Activated T-helper 1 cell treated with anti-CD3 and anti-CD28 coated beads, Interleukin-12 subunit alpha, Interleukin-12 subunit beta, Interleukin-2, Interleukin-4 antibody, amounts not matched to agents 30 ng/mL and 10 ng/mL and 1 ng/mL, durations not matched to agents 14 hours and 24 hours and 36 hours (primary cell): ENCODE measurements at regions of chr4 and their contacts with region 1.

Region 1: DNA sequence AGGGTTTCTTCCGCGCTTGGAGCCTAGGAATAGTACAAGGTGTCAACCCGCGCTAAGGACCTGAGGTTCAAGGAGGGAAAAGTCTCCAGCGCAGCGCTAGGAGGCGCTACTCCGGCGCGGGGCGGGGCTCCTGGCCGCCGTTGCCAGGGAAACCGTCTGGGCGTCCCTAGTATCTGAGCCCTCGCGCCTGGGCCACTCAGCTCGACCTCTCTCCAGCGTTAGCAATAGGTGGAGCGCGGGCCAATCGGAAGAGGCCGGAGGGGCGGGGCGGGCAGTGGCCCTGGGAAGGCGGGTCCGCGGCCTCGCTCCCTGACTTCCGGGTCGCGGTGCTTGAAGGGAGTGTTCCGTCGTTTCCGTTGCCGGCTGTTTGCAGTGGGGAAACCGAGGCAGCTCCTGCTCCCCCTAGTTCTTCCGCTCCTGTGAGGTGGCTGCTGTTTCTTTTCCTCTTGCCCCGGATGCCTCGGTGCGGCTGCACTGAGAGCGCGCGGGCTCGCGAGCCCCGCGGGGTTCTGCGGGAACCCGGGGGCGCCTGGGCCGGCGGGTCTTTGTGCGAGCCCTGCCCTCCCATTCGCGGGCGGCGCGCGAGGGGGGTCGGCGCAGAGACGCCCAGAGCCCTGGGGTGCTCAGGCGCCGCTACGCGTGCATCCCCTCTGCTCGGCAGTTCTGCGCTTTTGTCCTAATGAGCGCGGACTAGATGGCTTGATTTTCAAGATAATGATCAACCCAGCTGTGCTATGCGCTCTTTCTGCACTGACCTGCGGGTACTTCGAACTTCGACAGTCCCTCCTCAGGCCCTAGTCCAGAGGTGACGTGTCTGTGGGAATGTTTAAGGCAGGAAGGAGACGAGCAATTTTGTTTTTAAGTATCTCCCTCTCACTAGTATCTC is at the start of gene ELMOD2:
- DNase-seq: peak; percentile 97
- H3K4me3 Mint-ChIP-seq: peak within 1 kb of the TSS; percentile 88
- H3K27ac Mint-ChIP-seq: peak within 1 kb of the TSS; percentile 55
- H3K4me1 Mint-ChIP-seq: peaks cover 19% of the 10 kb centered on the region
- H3K27me3 Mint-ChIP-seq: no peaks in the 10 kb centered on the region
- total RNA-seq, gene ELMOD2: 10.8 and 15.7 TPM in 2 replicates

Region 2: DNA sequence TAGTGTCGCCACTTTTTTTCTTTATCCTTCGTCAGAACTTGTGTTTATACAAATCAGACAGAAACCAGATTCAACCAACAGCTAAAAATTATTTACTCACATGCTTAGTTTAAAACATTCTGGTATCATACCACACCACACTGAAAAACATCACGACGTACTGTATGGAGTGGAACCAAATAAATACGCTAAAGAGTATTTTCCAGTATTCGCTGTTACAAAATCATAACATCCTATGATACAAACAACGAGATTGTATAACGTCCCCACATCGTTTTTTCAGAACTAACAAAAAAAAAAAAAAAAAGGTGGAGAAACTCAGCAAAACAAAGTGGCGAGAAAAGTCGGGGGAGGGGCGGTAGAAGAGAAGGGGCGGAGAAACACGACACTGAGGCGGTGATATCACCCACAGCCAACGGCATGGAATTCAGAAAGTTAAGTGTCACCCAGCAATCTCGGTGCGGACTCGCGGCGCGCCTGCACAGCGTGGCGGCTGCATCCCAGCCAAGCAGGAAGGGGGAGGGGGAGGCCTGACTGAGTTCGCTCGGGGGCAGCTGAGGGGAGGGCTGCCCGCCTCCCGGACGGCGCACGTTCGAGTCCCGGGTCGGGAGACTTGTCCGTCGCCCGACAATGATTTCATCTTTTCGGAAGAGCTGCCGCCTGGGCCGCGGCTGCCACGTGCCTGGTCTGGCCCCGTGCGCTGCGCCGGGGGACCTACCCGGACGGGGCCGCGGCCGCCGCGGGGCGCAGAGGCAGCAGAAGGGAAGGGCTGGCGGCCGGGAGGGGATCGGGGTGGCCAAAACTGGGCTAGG is 969.0 kb before region 1 on chr4:
- intact Hi-C with region 1: loop called (anchors 2 kb)
- DNase-seq: peak; percentile 78
- H3K4me3 Mint-ChIP-seq: peak overlapping the region; percentile 93
- H3K27ac Mint-ChIP-seq: peak overlapping the region; percentile 96
- H3K4me1 Mint-ChIP-seq: peaks cover 47% of the 10 kb centered on the region
- H3K27me3 Mint-ChIP-seq: peaks cover 13% of the 10 kb centered on the region

Region 3: GRCh38 chr4:139875411-139875825 is 648.7 kb before region 1 on chr4:
- intact Hi-C with region 1: no loop called
- DNase-seq: no peak
- H3K4me3 Mint-ChIP-seq: no peak overlapping the region
- H3K27ac Mint-ChIP-seq: no peak overlapping the region
- H3K4me1 Mint-ChIP-seq: peaks cover 12% of the 10 kb centered on the region
- H3K27me3 Mint-ChIP-seq: no peaks in the 10 kb centered on the region

Region 4: GRCh38 chr4:140135529-140136088 is 388.5 kb before region 1 on chr4:
- intact Hi-C with region 1: no loop called
- DNase-seq: no peak
- H3K4me3 Mint-ChIP-seq: no peak overlapping the region
- H3K27ac Mint-ChIP-seq: no peak overlapping the region
- H3K4me1 Mint-ChIP-seq: peaks cover 26% of the 10 kb centered on the region
- H3K27me3 Mint-ChIP-seq: peaks cover 45% of the 10 kb centered on the region

Region 5: GRCh38 chr4:140556372-140557085 is 32.4 kb after region 1 on chr4:
- intact Hi-C with region 1: loop called (anchors 1 kb)
- DNase-seq: peak; percentile 8
- H3K4me3 Mint-ChIP-seq: no peak overlapping the region
- H3K27ac Mint-ChIP-seq: no peak overlapping the region
- H3K4me1 Mint-ChIP-seq: peaks cover 17% of the 10 kb centered on the region
- H3K27me3 Mint-ChIP-seq: peaks cover 31% of the 10 kb centered on the region

Region 6: DNA sequence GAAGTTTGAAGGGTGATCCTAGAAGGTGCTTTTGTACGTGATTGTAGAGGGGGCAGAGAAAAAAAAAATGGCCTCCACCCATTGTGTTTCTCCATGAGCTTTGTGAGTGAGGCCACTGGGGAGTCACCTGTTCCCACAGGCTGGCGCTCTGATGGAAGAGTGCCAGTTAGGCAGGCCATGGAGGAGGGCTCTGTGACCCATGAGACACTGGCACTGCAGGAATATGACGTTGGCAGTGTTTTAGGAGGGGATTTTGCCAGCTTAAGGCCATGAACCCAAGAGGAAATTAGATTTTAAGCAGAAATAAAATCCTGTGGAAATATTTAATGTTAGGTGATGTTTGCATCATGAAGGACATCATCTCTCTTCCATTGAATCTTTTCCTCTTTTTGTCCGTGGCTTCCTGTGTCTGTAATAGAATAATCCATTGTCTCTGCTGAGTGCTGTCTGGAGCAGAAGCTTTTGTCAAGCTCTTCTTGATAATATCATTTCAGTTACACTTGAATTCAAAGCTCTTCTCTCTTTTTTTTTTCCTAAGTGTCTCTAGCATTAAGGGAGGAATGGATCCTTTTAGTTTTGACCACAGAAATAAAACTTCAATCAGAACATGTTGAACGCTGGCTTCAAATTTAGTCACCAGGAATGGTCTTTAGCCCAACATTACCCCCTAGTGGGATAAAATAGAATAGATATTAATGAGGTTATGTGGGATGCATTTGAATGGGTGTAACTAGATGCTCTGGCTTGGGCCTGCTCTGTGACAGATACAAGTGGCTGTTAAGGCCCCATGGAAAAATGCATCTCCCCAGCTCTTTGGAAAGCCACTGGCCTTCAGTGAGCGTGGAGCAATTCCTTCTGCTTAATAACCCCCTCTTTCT is 85.7 kb after region 1 on chr4:
- intact Hi-C with region 1: loop called (anchors 1 kb)
- DNase-seq: no peak
- H3K4me3 Mint-ChIP-seq: no peak overlapping the region
- H3K27ac Mint-ChIP-seq: no peak overlapping the region
- H3K4me1 Mint-ChIP-seq: no peaks in the 10 kb centered on the region
- H3K27me3 Mint-ChIP-seq: peaks cover 13% of the 10 kb centered on the region

Region 7: DNA sequence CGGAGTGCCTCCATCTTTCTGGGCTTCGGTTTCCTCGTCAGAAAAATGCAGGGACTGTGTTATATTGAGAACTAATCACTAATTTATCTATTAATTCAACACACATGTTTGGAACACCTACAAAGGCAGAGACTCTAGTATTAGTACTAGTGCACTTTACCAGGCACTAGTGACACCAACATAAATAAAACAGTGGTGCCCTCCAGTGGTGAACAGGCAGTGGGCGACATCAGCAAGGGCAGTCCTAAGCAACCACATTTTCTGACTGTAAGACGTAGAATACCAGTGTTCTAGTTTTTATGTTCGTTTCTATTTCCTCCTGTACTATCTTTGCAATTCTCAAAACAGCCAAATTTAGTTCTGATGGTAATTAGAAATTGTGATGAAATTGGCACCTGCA is 113.7 kb after region 1 on chr4:
- intact Hi-C with region 1: no loop called
- DNase-seq: peak; percentile 8
- H3K4me3 Mint-ChIP-seq: no peak overlapping the region
- H3K27ac Mint-ChIP-seq: no peak overlapping the region
- H3K4me1 Mint-ChIP-seq: no peaks in the 10 kb centered on the region
- H3K27me3 Mint-ChIP-seq: no peaks in the 10 kb centered on the region

Region 8: DNA sequence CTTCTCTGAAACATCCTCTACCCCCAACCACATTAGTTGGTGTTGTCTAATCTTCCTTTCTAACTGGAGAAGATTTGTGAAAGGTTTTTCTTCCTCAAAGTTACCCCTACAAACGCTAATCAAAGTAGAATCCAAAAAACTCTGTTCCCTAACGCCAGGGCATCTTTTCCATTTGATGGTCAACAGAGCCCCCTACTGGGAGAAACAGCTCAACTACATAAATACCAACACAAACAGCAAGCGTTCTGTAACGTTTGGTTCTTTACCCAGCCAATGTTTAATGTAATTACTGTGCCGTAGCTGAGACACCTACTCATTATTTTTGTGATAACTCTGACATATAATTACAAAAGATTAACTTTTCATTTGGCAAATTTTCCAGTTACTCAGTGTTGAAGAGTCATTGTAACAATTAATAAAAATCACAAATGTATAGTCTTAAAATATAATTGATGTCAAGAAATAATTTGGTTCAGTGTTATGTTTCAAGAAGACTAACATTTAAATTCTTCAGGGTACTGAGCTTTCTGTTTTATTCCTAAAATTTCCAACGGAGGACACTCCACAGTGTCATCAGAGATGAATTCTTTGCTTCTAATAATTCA is 327.0 kb after region 1 on chr4:
- intact Hi-C with region 1: loop called (anchors 1 kb)
- DNase-seq: peak; percentile 3
- H3K4me3 Mint-ChIP-seq: no peak overlapping the region
- H3K27ac Mint-ChIP-seq: no peak overlapping the region
- H3K4me1 Mint-ChIP-seq: no peaks in the 10 kb centered on the region
- H3K27me3 Mint-ChIP-seq: peaks cover 2% of the 10 kb centered on the region

Region 9: GRCh38 chr4:141220655-141221605 is 696.8 kb after region 1 on chr4 and contains the start of gene ZNF330:
- intact Hi-C with region 1: loop called (anchors 2 kb)
- DNase-seq: peak; percentile 83
- H3K4me3 Mint-ChIP-seq: peak within 1 kb of the TSS; percentile 93
- H3K27ac Mint-ChIP-seq: peak within 1 kb of the TSS; percentile 98
- H3K4me1 Mint-ChIP-seq: peaks cover 47% of the 10 kb centered on the region
- H3K27me3 Mint-ChIP-seq: peaks cover 6% of the 10 kb centered on the region
- total RNA-seq, gene ZNF330: 57.8 and 62.9 TPM in 2 replicates

Region 10: GRCh38 chr4:141346144-141346543 is 822.0 kb after region 1 on chr4:
- intact Hi-C with region 1: no loop called
- DNase-seq: no peak
- H3K4me3 Mint-ChIP-seq: no peak overlapping the region
- H3K27ac Mint-ChIP-seq: no peak overlapping the region
- H3K4me1 Mint-ChIP-seq: no peaks in the 10 kb centered on the region
- H3K27me3 Mint-ChIP-seq: no peaks in the 10 kb centered on the region